GM12878 (cell line): ENCODE measurements at regions of chr3 and their contacts with region 1.

Region 1: DNA sequence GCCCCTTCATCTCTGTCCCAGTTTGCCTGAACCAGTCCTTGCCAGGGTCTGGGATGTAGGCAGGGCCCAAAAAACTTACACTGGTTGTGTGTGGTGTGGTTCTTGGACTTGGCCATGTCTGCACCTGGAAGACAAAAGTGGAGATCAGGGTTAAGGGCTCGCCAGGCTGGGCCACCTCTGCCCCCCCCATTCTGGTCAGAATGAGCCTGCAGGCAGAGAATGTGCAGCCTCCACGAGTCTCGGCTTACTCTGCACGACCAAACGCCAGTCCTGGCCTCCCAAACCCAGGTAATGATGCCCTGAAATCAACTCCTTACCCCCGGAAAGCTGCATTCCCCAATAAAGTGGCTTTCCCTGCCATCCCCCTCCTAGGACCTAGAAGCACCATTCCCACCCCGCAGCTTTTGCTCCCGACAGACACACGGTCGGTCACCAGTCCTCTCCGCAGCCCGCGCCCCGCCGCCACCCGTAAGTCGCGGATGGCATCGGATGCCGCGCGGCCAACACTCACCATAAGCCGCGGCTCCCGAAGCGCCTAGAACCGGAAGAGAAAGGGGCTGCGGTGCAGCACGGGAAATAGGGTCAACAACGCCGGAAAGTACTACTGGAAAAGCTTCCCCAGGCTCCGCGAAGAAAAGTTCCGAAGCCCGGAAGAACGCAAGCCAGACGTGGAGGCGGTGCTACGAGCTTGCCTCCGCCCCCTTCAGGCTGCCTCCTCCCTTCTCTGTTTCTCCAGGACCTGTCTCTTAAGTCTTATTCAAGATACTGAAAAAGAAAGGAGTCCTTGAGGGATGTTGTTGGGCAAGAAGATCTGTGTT is at the start of gene RPL29:
- DNase-seq: peak; percentile 88
- ATAC-seq: peak; percentile 92
- H3K4me3 ChIP-seq: peak within 1 kb of the TSS; percentile 99
- H3K27ac ChIP-seq: peak within 1 kb of the TSS; percentile 66
- H3K4me1 ChIP-seq: peaks cover 9% of the 10 kb centered on the region
- H3K27me3 ChIP-seq: no peaks in the 10 kb centered on the region; a peak in 1 of 4 replicates
- CTCF ChIP-seq: no peak
- EP300 ChIP-seq: no peak
- POLR2A ChIP-seq: peak; percentile 100
- RAD21 ChIP-seq: no peak
- polyA plus RNA-seq, gene RPL29: 1,053 to 1,085 TPM

Region 2: DNA sequence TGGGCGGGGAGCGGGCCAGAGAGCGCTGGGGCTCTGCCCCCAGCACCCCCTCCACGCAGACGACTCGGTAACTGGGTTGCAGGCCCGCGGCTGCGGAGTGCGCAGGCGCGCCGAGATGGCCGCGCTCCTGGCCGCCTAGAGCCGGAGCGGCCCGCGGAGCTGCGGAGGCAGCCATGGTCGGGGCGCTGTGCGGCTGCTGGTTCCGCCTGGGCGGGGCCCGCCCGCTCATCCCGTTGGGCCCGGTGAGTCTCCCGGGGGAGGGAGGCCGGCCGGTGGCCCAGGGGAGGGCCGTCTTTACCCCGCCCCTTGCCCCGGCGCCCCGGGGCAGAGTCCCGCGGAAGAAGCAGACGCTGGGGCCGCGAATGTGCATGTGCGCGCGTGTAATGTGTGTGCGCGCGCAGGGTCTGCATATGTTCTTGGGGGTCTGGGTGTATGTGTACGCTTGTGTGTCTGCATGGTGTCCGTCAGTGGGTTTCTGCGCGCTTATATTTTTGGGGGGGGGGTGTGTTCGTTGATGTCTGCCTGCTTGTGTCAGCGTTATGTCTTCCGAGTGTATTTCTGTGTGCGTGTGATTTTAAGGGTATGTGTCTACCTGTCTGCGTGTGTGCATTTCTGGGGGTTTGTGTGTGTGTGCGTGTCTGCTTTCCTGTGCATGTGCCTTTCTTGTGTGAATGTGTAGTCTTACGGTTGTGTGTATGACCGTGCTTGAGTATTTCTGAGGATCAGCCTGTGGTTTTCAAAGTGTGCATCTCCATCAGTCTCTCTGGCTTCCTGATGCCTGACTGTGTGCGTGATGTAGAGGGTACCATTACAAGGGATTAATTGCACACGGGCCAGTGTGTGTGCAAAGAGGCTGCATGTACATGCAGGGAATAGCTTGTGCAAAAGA is 20.3 kb before region 1 on chr3 and contains the start of gene ABHD14A:
- CTCF ChIA-PET with region 1: interaction called, 13 read pairs
- POLR2A ChIA-PET with region 1: no interaction called
- RAD21 ChIA-PET with region 1: interaction called, 3 read pairs
- SMC1A ChIA-PET with region 1: no interaction called
- in situ Hi-C with region 1: no loop called
- intact Hi-C with region 1: no loop called
- DNase-seq: no peak
- ATAC-seq: peak; percentile 91
- H3K4me3 ChIP-seq: peak within 1 kb of the TSS; percentile 84
- H3K27ac ChIP-seq: peak within 1 kb of the TSS; percentile 91
- H3K4me1 ChIP-seq: peaks cover 15% of the 10 kb centered on the region
- H3K27me3 ChIP-seq: no peaks in the 10 kb centered on the region
- CTCF ChIP-seq: no peak
- EP300 ChIP-seq: no peak
- POLR2A ChIP-seq: peak; percentile 88
- RAD21 ChIP-seq: no peak
- polyA plus RNA-seq, gene ABHD14A: 1.2 to 2.2 TPM

Region 3: GRCh38 chr3:51982782-51983577 is 12.6 kb before region 1 on chr3 and contains the start of gene ACY1:
- CTCF ChIA-PET with region 1: interaction called, 12 read pairs
- POLR2A ChIA-PET with region 1: interaction called, 30 read pairs
- RAD21 ChIA-PET with region 1: interaction called, 6 read pairs
- SMC1A ChIA-PET with region 1: interaction called, 12 read pairs
- in situ Hi-C with region 1: no loop called
- intact Hi-C with region 1: no loop called
- DNase-seq: peak; percentile 43
- ATAC-seq: peak; percentile 92
- H3K4me3 ChIP-seq: peak within 1 kb of the TSS; percentile 97
- H3K27ac ChIP-seq: peak within 1 kb of the TSS; percentile 73
- H3K4me1 ChIP-seq: peaks cover 8% of the 10 kb centered on the region
- H3K27me3 ChIP-seq: no peaks in the 10 kb centered on the region
- CTCF ChIP-seq: no peak
- EP300 ChIP-seq: no peak
- POLR2A ChIP-seq: peak; percentile 81; the same call in 1 of the 2 replicates
- RAD21 ChIP-seq: no peak
- polyA plus RNA-seq, gene ACY1: 19.8 to 28.2 TPM